ENCODE measurements at regions of chr21 and their contacts with region 1.

Region 1: DNA sequence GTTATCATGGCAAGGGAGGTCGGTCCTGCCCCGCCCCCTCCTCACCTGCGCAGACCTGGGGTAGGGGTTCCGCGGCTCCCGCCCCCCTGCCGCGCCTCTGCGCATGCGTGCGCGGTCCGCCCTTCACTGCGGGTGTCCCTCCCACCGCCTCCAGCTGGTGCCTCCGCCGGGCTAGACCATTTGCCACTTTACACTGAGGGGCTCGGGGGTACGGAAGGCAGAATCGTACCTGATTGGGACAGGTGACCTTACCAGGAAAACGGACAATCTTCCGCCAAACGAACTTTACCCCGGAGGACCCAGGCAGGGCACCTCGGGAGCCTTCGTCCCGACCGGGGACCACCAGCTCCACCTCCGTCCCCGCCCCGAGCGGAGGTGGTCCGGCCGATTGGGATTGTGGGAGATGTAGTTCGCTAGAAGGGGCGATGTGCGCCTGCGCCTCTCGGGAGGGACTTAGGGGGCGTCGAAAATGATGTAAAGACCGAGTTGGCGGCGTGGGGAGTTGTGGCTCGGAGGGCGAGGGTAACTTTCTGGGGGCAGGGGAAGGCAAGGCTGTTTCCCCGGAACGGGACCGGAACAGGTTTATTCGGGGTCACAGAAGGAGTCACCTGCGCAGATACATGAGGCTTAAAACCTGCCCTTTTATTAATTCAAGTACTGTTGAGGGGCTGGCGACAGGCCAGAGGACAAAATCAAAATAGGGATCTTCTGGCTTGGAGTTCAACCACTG is at the start of gene DNAJC28:
- DNase-seq: peak; percentile 81 to 88
- ATAC-seq: peak; percentile 97 to 99
- H3K4me3 ChIP-seq: peak within 1 kb of the TSS; percentile 59 to 93 (median 82)
- H3K27ac ChIP-seq: peak within 1 kb of the TSS; percentile 86 to 91 (median 88)
- H3K4me1 ChIP-seq: peaks cover 3 to 12% of the 10 kb centered on the region in 2 donors
- H3K27me3 ChIP-seq: no peaks in the 10 kb centered on the region
- CTCF ChIP-seq: no peak
- POLR2A ChIP-seq: peak; percentile 44 to 50
- total RNA-seq, gene DNAJC28: 1.5 to 3.4 (median 2.5) TPM

Region 2: GRCh38 chr21:33238565-33239255 is 252.8 kb before region 1 on chr21:
- in situ Hi-C with region 1: no loop called
- intact Hi-C with region 1: no loop called
- DNase-seq: no peak
- ATAC-seq: no peak
- H3K4me3 ChIP-seq: no peak overlapping the region
- H3K27ac ChIP-seq: peak overlapping the region in 3 of 4 donors; percentile 25 to 35 (median 28)
- H3K4me1 ChIP-seq: peaks cover 27 to 36% of the 10 kb centered on the region in 2 donors
- H3K27me3 ChIP-seq: no peaks in the 10 kb centered on the region
- CTCF ChIP-seq: no peak
- POLR2A ChIP-seq: no peak

Region 3: GRCh38 chr21:33479679-33480480 is 11.7 kb before region 1 on chr21 and contains the start of gene TMEM50B:
- in situ Hi-C with region 1: no loop called
- intact Hi-C with region 1: loop called (anchors 1 kb)
- DNase-seq: peak; percentile 94 to 95
- ATAC-seq: peak; percentile 90 to 91
- H3K4me3 ChIP-seq: peak within 1 kb of the TSS; percentile 74 to 99 (median 88)
- H3K27ac ChIP-seq: peak within 1 kb of the TSS; percentile 88 to 98 (median 94)
- H3K4me1 ChIP-seq: peaks cover 13 to 14% of the 10 kb centered on the region in 2 donors
- H3K27me3 ChIP-seq: no peaks in the 10 kb centered on the region
- CTCF ChIP-seq: peak; percentile 44 to 68 (median 52)
- POLR2A ChIP-seq: peak; percentile 94 to 97
- total RNA-seq, gene TMEM50B: 33.2 to 47.1 (median 44.6) TPM